ENCODE measurements at regions of chrX and their contacts with region 1.

Region 1: GRCh38 chrX:56744996-56745395 is 16.0 kb downstream of the NBDY start:
- DNase-seq: peak in 2 of 3 donors; percentile 35 to 74
- H3K4me3 ChIP-seq: no peak overlapping the region
- H3K4me3 Mint-ChIP-seq: peak overlapping the region in 1 of 2 donors; percentile 68
- H3K27ac ChIP-seq: peak overlapping the region in 1 of 2 donors; percentile 33
- H3K27ac Mint-ChIP-seq: peak overlapping the region in 1 of 7 donors; percentile 57
- H3K4me1 ChIP-seq: peaks cover 3 to 5% of the 10 kb centered on the region in 2 donors
- H3K4me1 Mint-ChIP-seq: peaks cover 11% of the 10 kb centered on the region
- H3K27me3 ChIP-seq: peaks cover 0 to 18% of the 10 kb centered on the region in 2 donors
- H3K27me3 Mint-ChIP-seq: peaks cover 0 to 12% (median 0%) of the 10 kb centered on the region in 3 donors
- CTCF ChIP-seq: no peak

Region 2: GRCh38 chrX:56853436-56853835 is 108.4 kb after region 1 on chrX:
- intact Hi-C with region 1: no loop called
- DNase-seq: no peak
- H3K4me3 ChIP-seq: no peak overlapping the region
- H3K4me3 Mint-ChIP-seq: no peak overlapping the region
- H3K27ac ChIP-seq: no peak overlapping the region
- H3K27ac Mint-ChIP-seq: no peak overlapping the region
- H3K4me1 ChIP-seq: no peaks in the 10 kb centered on the region
- H3K4me1 Mint-ChIP-seq: no peaks in the 10 kb centered on the region
- H3K27me3 ChIP-seq: no peaks in the 10 kb centered on the region
- H3K27me3 Mint-ChIP-seq: peaks cover 1 to 8% (median 2%) of the 10 kb centered on the region in 3 donors
- CTCF ChIP-seq: no peak

Region 3: DNA sequence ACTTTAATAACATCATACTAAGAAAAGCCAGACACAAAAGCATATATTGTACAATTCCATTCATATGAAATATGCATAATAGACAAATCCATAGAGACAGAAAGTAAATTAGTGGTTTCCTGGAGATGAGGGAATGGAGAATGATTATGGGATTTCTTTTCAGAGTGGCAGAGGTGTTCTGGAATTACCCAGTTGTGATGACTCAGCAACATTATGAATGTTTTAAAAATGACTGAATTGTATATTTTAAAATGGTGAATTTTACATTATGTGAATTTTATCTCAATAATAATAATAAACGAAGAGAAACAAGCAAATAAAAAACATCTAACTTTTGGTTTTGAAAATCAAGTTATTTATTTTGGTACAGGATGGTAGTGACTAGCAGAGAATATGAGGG is 1154.1 kb after region 1 on chrX:
- intact Hi-C with region 1: loop called in 1 of 2 experiments (anchors 10 kb)
- DNase-seq: no peak
- H3K4me3 ChIP-seq: no peak overlapping the region
- H3K4me3 Mint-ChIP-seq: no peak overlapping the region
- H3K27ac ChIP-seq: no peak overlapping the region
- H3K27ac Mint-ChIP-seq: no peak overlapping the region
- H3K4me1 ChIP-seq: no peaks in the 10 kb centered on the region
- H3K4me1 Mint-ChIP-seq: no peaks in the 10 kb centered on the region
- H3K27me3 ChIP-seq: no peaks in the 10 kb centered on the region
- H3K27me3 Mint-ChIP-seq: peaks cover 0 to 1% (median 0%) of the 10 kb centered on the region in 3 donors
- CTCF ChIP-seq: no peak